ENCODE measurements at regions of chr4 and their contacts with region 1.

Region 1: DNA sequence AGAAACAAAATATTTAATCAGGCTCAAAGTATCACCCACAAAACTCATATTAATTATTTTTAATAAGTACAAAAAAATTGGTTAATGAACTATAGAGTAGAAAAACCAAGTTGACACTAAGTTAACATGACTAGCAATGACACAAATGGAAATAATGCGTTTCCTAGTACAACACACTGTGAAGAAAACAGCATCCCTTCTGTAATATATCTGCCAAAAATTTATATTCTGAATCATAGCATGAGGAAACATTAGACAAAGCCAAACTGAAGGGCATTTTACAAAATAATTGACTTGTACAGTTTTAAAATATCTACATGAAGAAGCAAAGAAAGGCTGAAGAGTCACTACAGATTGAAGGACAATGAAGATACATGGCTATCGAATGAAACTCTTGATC is 477.6 kb upstream of the INTU start:
- DNase-seq: no peak
- ATAC-seq: no peak

Region 2: DNA sequence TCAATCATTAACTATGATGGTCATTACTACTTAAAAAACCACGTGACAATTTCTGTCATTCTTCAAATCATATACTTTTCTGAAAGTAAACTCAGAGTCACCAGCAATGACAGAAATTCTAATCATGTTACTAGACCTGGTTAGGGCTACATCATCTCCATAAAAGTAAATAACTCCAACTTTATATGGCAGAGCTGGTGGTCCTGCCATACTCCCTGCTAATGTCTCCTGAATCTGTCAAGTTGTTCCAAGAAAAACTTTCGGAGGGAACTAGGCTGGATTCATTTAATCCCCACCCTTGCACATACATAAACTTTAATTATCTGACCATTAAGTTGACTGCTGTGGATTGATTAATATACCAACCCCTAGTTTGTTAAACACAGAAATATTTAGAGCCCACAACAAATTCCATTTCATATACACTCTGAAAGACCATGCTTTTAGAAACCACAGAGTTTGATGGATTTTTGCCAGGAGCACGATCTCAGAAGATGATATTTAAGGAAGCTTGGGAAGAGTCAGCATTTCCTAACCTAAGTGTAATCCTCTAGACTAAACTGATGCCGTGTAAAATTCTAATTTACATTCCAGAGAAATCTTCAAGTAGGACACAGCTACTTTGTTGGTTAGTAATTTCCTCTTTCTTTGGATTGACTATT is 1263.4 kb before region 1 on chr4:
- intact Hi-C with region 1: loop called (anchors 10 kb)
- DNase-seq: no peak
- ATAC-seq: no peak

Region 3: DNA sequence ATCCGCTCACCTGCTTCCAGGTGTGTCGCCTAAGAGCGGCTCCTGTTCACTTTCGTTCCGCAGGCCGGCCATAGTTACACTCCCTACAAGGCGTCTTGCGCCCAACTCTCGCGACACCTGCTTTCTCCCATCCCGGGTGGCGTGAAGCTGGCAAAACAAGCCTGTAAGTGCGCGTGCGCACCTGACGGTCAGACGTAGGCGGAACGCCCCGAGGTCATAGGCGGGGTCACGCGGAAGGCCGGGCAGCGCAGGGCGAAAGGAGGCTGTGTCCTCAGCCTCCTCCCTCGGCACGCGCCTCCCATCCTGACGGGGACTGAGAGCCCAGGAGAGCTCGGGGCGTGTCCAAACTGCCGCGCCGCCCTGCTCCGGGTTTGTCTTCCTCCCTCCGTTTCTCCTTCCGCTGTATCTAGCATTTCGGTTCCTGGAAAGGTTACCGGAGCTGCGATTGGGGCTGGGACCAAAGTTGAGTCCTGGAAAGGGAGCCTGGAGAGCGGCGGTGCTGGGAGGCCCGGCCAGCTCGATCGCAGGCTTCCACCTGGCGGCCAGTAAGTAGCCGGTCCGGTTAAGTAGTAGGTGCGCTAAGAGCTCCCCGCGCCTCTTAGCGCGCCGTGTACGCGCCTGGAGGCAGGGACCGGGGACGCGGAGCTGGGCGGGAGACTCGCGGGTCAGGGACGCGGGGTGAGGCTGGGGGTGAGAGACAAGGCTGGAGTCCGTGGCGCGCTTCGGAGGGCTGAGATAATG is 810.1 kb after region 1 on chr4 and contains the starts of genes ABHD18 and MFSD8:
- intact Hi-C with region 1: no loop called
- DNase-seq: peak; percentile 99
- ATAC-seq: peak; percentile 99
- total RNA-seq, gene ABHD18: 14.2 TPM
- total RNA-seq, gene MFSD8: 37.5 TPM